ENCODE measurements at regions of chr1 and their contacts with region 1.

Region 1: DNA sequence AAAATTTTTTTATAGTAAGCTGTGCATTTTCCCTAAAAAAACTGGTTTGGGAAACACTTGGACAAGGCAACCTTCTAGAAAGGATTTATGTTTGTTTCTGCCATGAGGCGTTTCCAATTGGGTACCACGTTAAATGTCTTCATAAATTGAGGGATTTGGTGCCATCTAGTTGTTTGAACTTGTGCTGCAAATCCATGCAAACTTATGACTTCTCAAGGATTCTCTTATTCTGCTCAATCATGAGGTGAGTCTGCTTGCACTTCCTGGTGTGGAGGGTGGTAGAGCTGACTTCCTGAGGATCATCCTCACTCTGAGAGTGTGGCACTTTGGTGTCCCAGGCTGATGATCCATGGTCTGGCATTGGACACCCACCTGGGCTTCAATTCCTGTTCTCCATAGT is 123.3 kb downstream of the PCNX2 start:
- DNase-seq: no peak
- H3K4me3 ChIP-seq: no peak overlapping the region
- H3K27ac ChIP-seq: no peak overlapping the region
- H3K4me1 ChIP-seq: no peaks in the 10 kb centered on the region
- H3K27me3 ChIP-seq: no peaks in the 10 kb centered on the region
- CTCF ChIP-seq: no peak

Region 2: DNA sequence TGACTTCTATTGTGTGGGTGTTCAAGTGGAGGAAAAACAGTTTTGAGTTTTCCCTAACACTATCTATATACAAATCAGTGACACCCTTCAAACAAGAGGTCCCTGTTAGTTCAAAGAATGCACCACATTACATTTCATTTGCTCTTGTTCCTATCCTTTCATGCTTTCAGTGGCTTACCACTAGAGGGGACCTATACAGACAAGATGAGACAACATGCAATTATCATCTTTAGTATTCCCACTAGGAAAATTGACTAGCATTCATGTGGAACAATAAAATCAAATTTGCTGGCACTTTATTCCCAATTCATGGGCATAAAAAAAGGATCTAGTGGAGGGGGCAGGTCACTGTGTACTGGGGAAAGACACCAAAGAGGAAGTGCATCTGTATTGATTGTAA is 529.0 kb before region 1 on chr1:
- intact Hi-C with region 1: loop called (anchors 10 kb)
- DNase-seq: no peak
- H3K4me3 ChIP-seq: no peak overlapping the region
- H3K27ac ChIP-seq: no peak overlapping the region
- H3K4me1 ChIP-seq: no peaks in the 10 kb centered on the region
- H3K27me3 ChIP-seq: no peaks in the 10 kb centered on the region
- CTCF ChIP-seq: no peak